Heart right ventricle (tissue), 16 donors: ENCODE measurements at regions of chr3 and their contacts with region 1.

Region 1: GRCh38 chr3:86208772-86209532 is 782.0 kb downstream of the VGLL3 start:
- DNase-seq: no peak
- ATAC-seq: no peak
- H3K4me3 ChIP-seq: no peak overlapping the region
- H3K27ac ChIP-seq: no peak overlapping the region
- H3K4me1 ChIP-seq: no peaks in the 10 kb centered on the region
- H3K27me3 ChIP-seq: no peaks in the 10 kb centered on the region
- CTCF ChIP-seq: no peak

Region 2: GRCh38 chr3:86087160-86087871 is 121.6 kb before region 1 on chr3:
- intact Hi-C with region 1: no loop called
- DNase-seq: no peak
- ATAC-seq: no peak
- H3K4me3 ChIP-seq: no peak overlapping the region
- H3K27ac ChIP-seq: no peak overlapping the region
- H3K4me1 ChIP-seq: no peaks in the 10 kb centered on the region
- H3K27me3 ChIP-seq: no peaks in the 10 kb centered on the region
- CTCF ChIP-seq: no peak

Region 3: GRCh38 chr3:86152620-86153019 is 56.3 kb before region 1 on chr3:
- intact Hi-C with region 1: loop called in 1 of 10 experiments (anchors 10 kb)
- DNase-seq: no peak
- ATAC-seq: no peak
- H3K4me3 ChIP-seq: no peak overlapping the region
- H3K27ac ChIP-seq: no peak overlapping the region
- H3K4me1 ChIP-seq: no peaks in the 10 kb centered on the region
- H3K27me3 ChIP-seq: no peaks in the 10 kb centered on the region
- CTCF ChIP-seq: no peak